ENCODE measurements at regions of chr7 and their contacts with region 1.

Region 1: DNA sequence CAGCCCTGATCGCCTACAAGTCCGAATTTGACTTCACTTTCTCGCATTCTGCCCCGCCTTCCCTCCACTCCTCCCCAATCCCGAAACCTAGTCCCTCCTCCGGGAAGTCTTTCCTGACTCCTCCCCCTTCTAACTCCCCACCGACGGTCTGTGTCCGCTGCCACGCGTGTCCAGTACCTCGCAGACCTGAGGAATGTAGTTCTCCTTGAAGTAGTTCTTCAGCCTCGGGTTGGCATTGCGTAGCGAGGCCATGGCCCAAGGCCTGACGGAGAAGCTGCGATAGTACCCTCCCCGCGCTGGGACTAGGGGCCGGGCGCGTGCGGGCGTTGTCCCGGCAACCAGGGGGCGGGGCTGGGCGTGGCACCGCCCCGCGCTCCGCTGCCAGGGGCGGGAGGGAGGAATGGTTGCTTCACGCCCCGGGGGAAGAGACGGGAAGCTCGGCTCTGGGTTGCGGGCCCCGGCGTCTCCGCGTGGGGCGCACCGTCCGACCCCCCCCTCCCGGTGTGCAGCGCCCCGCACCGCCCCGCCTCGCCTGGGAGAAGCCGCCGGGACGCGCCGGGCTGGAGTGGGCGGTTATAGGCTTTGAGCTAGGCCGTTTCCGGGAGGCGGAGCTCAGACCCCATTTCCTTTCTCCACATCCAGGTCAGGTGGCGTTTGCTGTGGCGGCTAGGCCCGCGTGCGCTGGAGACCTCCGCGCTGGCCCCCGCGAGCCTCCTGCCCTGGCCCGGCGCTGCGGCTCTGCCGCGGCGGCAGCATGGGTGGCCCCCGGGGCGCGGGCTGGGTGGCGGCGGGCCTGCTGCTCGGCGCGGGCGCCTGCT is at the starts of genes ARMC10 and FBXL13:
- DNase-seq: peak; percentile 96
- ATAC-seq: peak; percentile 82
- H3K4me3 ChIP-seq: peak within 1 kb of the TSS; percentile 58 to 92 (median 79)
- H3K4me3 Mint-ChIP-seq: peak within 1 kb of the TSS; percentile 97
- H3K27ac ChIP-seq: peak within 1 kb of the TSS; percentile 45 to 82
- H3K27ac Mint-ChIP-seq: peak within 1 kb of the TSS; percentile 96
- H3K4me1 ChIP-seq: peaks cover 13 to 24% of the 10 kb centered on the region in 2 donors
- H3K4me1 Mint-ChIP-seq: peaks cover 32% of the 10 kb centered on the region
- H3K27me3 ChIP-seq: no peaks in the 10 kb centered on the region
- H3K27me3 Mint-ChIP-seq: no peaks in the 10 kb centered on the region
- CTCF ChIP-seq: peak; percentile 39
- total RNA-seq, gene ARMC10: 24.2 and 28.0 TPM in 2 replicates
- total RNA-seq, gene FBXL13: 2.4 and 4.0 TPM in 2 replicates

Region 2: GRCh38 chr7:103148994-103149807 is 74.5 kb after region 1 on chr7 and contains the start of gene NAPEPLD:
- CTCF ChIA-PET with region 1: no interaction called
- POLR2A ChIA-PET with region 1: interaction called, 8 read pairs
- intact Hi-C with region 1: loop called (anchors 1 kb)
- DNase-seq: peak; percentile 93
- ATAC-seq: peak; percentile 87
- H3K4me3 ChIP-seq: peak within 1 kb of the TSS; percentile 90 to 100 (median 98)
- H3K4me3 Mint-ChIP-seq: peak within 1 kb of the TSS; percentile 97
- H3K27ac ChIP-seq: peak within 1 kb of the TSS; percentile 82 to 84
- H3K27ac Mint-ChIP-seq: peak within 1 kb of the TSS; percentile 97
- H3K4me1 ChIP-seq: peaks cover 18 to 19% of the 10 kb centered on the region in 2 donors
- H3K4me1 Mint-ChIP-seq: peaks cover 40% of the 10 kb centered on the region
- H3K27me3 ChIP-seq: no peaks in the 10 kb centered on the region
- H3K27me3 Mint-ChIP-seq: no peaks in the 10 kb centered on the region
- CTCF ChIP-seq: no peak
- total RNA-seq, gene NAPEPLD: 20.7 and 22.8 TPM in 2 replicates

Region 3: DNA sequence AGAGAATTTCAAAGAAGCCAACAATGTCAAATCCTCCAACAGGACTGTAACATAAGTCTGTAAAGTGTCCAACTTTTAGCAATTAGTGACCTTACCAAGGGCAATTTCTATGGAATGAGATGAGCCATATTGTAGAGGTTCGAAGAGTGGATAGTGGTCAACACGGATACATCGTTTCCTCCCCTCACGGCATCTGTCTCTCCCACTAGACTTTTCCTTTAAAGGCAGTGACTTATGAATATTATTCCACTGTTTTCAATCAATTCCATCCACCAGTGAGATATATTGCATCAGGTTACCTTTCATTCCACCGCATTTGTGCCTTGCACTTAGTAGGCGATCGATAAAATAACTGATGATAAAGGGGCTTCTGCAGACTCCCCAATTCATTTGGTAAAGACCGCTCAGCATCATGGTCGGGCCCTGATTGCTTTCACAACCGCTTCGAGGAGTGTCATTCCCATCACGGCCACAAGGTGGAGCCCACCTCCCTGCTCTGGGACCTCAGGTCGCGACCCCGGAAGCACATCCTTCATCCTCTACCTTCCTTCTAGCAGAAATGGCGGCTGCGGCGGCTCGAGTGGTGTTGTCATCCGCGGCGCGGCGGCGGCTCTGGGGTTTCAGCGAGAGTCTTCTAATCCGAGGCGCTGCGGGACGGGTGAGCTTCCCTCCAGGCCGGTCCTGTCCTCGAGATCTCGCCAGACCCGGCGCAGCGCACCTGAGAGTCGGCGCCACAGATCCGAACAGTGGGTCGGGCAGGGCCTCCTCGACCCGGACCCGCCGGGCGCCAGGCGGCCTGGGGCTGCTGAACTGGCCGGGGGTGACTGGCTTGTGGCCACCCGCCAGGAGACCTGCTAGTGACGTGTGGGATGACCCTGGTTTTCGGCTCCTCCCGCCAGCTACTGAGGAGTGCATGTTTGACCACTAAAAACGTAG is 222.4 kb after region 1 on chr7 and contains the start of gene PMPCB:
- CTCF ChIA-PET with region 1: no interaction called
- POLR2A ChIA-PET with region 1: no interaction called
- intact Hi-C with region 1: loop called (anchors 5 kb)
- DNase-seq: peak; percentile 95
- ATAC-seq: peak; percentile 100
- H3K4me3 ChIP-seq: peak within 1 kb of the TSS; percentile 79 to 98 (median 88)
- H3K4me3 Mint-ChIP-seq: peak within 1 kb of the TSS; percentile 90
- H3K27ac ChIP-seq: peak within 1 kb of the TSS; percentile 86 to 94
- H3K27ac Mint-ChIP-seq: peak within 1 kb of the TSS; percentile 91
- H3K4me1 ChIP-seq: peaks cover 17 to 19% of the 10 kb centered on the region in 2 donors
- H3K4me1 Mint-ChIP-seq: peaks cover 22% of the 10 kb centered on the region
- H3K27me3 ChIP-seq: no peaks in the 10 kb centered on the region
- H3K27me3 Mint-ChIP-seq: peaks cover 3% of the 10 kb centered on the region
- CTCF ChIP-seq: peak; percentile 85
- total RNA-seq, gene PMPCB: 70.9 and 72.8 TPM in 2 replicates

Measured in B cell (primary cell).